K562 (cell line): ENCODE measurements at regions of chr1 and their contacts with region 1.

Region 1: GRCh38 chr1:54406339-54407153 is at the start of gene SSBP3:
- DNase-seq: peak; percentile 97 to 99 (median 97)
- ATAC-seq: peak; percentile 88
- H3K4me3 ChIP-seq: peak within 1 kb of the TSS; percentile 73
- H3K27ac ChIP-seq: peak within 1 kb of the TSS; percentile 97
- H3K4me1 ChIP-seq: peaks cover 64 to 70% of the 10 kb centered on the region in 2 experiments
- H3K27me3 ChIP-seq: no peaks in the 10 kb centered on the region
- CTCF ChIP-seq: peak in 1 of 3 experiments; percentile 12; a peak in 1 of 6 replicates
- EP300 ChIP-seq: no peak
- POLR2A ChIP-seq: peak; percentile 70
- RAD21 ChIP-seq: peak; percentile 21 to 29; a peak in 1 of 4 replicates
- polyA plus RNA-seq, gene SSBP3: 8.7 TPM

Region 2: GRCh38 chr1:53207726-53208125 is 1198.8 kb before region 1 on chr1:
- CTCF ChIA-PET with region 1: no interaction called
- POLR2A ChIA-PET with region 1: no interaction called
- in situ Hi-C with region 1: no loop called
- intact Hi-C with region 1: no loop called
- DNase-seq: no peak
- ATAC-seq: no peak
- H3K4me3 ChIP-seq: no peak overlapping the region
- H3K27ac ChIP-seq: no peak overlapping the region
- H3K4me1 ChIP-seq: no peaks in the 10 kb centered on the region
- H3K27me3 ChIP-seq: no peaks in the 10 kb centered on the region
- CTCF ChIP-seq: no peak
- EP300 ChIP-seq: no peak
- POLR2A ChIP-seq: no peak
- RAD21 ChIP-seq: no peak

Region 3: DNA sequence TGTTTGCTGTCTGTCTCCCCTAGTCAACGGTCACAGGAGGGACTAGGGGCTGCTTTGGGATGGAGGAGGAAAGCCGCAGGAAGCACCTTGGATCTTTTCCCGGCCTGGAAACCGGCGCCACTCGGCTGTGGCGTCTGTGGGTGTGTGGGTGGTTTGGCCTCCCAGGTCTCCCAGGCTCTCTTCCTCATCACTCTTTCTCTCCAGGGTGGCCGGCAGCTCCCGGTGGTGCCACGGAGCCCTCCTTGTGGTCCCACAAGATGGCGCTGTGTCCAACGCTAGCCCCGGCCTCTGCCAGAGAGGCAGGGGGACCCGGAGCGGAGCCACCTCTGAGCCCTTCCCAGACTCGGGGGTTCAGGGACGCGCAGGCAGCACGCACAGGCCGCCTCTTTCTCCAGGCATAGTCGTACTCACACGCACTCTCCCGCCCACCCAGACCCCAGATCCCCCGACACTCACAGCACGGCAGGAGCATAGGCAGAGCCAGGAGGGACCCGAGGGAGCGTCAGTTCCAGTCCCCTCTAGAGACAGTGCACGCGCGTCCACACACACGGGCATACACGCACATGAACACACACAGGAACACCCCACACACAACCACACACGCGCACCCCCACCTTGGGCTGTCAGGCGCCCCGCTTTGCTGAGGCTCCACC is 284.9 kb before region 1 on chr1:
- CTCF ChIA-PET with region 1: no interaction called
- POLR2A ChIA-PET with region 1: no interaction called
- in situ Hi-C with region 1: no loop called
- intact Hi-C with region 1: loop called (anchors 1 kb)
- DNase-seq: peak; percentile 90 to 94 (median 94)
- ATAC-seq: peak; percentile 96
- H3K4me3 ChIP-seq: peak overlapping the region; percentile 17
- H3K27ac ChIP-seq: no peak overlapping the region
- H3K4me1 ChIP-seq: peaks cover 7 to 21% of the 10 kb centered on the region in 2 experiments; a peak in 4 of 5 replicates
- H3K27me3 ChIP-seq: peaks cover 3 to 18% of the 10 kb centered on the region in 2 experiments; a peak in 3 of 5 replicates
- CTCF ChIP-seq: peak; percentile 91 to 93 (median 92)
- EP300 ChIP-seq: peak; percentile 27; the same call in 1 of the 2 replicates
- POLR2A ChIP-seq: no peak
- RAD21 ChIP-seq: peak; percentile 89 to 93

Region 4: DNA sequence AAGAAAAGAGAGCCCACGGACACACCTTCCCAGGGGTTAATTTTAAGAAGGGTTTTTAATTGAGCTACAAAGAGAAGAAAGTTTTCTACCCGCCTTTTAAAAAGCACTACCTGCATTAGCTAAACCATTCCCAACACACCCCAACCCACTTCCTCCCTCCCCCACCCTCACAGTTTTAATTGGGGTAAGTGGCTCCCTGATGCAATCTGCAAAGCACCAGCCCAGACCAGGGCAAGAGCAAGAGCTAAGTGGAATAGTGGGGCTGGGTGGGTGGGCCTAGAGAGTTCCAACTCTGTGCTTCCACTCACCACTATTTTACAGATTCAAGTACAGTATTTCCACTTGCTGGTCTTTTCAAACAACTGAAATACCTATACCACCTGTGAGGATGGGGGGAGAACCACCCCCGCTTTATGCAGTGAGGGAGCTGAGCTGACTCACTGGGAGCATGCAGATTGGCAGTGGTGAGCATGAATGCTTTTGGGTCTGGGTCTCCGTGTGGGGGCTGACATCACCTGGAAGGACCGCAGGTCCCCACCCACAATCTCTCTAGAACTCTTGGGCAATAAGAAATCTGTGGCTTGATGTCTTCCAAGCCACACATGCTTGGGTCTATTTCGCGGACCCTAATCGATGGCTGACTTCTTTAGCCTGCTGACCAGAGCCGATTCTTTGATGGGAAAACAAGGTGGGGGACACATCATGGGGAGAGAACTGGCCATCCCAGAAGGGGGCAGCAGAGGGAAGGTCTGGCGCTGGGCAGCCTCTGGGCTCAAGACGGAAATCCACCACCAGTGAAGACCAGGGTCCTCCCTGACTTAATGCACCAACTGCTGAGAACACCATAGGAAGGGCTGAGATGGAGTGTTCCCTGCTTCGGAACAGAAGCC is 95.9 kb before region 1 on chr1:
- CTCF ChIA-PET with region 1: no interaction called
- POLR2A ChIA-PET with region 1: interaction called, 4 read pairs
- in situ Hi-C with region 1: no loop called
- intact Hi-C with region 1: loop called (anchors 2 kb)
- DNase-seq: peak; percentile 66 to 79 (median 74)
- ATAC-seq: peak; percentile 89
- H3K4me3 ChIP-seq: no peak overlapping the region
- H3K27ac ChIP-seq: no peak overlapping the region
- H3K4me1 ChIP-seq: peaks cover 22 to 33% of the 10 kb centered on the region in 2 experiments
- H3K27me3 ChIP-seq: no peaks in the 10 kb centered on the region
- CTCF ChIP-seq: peak; percentile 77 to 81 (median 79)
- EP300 ChIP-seq: no peak
- POLR2A ChIP-seq: no peak
- RAD21 ChIP-seq: peak; percentile 73 to 90

Region 5: DNA sequence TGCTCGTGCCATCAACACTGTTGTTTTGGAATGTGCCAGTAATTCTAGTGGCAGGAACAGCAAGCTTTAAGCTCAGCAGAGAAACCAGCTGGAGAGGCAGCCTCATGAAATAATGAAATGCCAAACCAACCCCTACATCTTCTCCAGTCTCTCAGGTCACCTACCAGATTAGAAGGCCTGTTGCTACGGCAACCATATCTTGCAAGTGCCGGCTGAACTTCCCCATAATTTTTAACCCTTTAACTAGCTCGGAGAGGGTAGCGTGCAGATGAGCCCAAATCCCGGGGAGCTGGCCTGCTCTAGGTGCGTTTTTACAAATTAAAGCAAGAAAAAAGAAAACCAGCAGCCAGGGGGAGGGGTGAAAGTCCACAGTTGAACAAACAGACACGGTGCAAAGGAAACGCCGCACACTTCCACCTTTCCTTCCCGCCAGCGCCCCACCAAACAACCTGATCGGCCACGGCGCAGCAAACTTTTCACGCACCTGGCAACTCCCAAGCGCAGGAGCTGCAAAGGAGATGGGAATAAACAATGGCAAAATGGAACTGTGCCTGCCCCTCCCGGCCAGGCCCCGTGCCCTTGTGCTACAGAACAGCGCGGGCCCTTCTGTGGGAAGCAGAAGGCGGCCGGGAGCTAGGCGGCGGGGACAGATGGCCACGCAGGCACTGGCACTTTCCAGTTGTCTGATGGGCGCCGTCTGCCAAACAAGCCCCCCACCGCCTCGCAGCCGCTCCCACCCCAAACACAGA is 50.4 kb before region 1 on chr1:
- CTCF ChIA-PET with region 1: no interaction called
- POLR2A ChIA-PET with region 1: interaction called, 5 read pairs
- in situ Hi-C with region 1: no loop called
- intact Hi-C with region 1: loop called (anchors 2 kb)
- DNase-seq: peak in 3 of 4 experiments; percentile 54 to 90 (median 79)
- ATAC-seq: peak; percentile 84
- H3K4me3 ChIP-seq: peak overlapping the region; percentile 6; the same call in 1 of the 2 replicates
- H3K27ac ChIP-seq: peak overlapping the region; percentile 6; the same call in 1 of the 3 replicates
- H3K4me1 ChIP-seq: peaks cover 40 to 54% of the 10 kb centered on the region in 2 experiments
- H3K27me3 ChIP-seq: no peaks in the 10 kb centered on the region
- CTCF ChIP-seq: no peak
- EP300 ChIP-seq: 0 out of 2 replicates have a peak, but pooled peaks have one; percentile 12
- POLR2A ChIP-seq: no peak
- RAD21 ChIP-seq: no peak

Region 6: DNA sequence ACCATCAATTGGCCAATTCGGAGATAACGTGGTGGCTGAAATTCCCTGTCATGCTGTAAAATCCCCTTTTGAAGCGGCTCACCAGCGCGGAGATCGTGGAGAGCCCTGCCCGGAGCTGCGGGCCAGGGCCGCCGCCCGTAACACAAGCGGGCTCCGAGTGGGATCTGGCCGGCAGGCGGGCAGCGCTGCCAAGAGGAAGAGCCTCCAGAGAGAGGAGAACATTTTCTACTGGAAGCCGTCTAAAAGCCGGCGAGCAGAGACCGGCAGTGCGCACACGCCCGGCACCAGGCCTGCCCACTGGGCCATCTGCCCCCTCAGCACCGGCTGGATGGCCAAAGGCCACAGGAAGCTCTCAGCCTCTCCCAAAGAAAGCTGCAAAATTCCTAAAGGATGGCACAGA is 15.9 kb before region 1 on chr1:
- CTCF ChIA-PET with region 1: no interaction called
- POLR2A ChIA-PET with region 1: interaction called, 21 read pairs
- in situ Hi-C with region 1: no loop called
- intact Hi-C with region 1: no loop called
- DNase-seq: no peak
- ATAC-seq: no peak
- H3K4me3 ChIP-seq: no peak overlapping the region
- H3K27ac ChIP-seq: no peak overlapping the region
- H3K4me1 ChIP-seq: peaks cover 4 to 6% of the 10 kb centered on the region in 2 experiments; a peak in 4 of 5 replicates
- H3K27me3 ChIP-seq: no peaks in the 10 kb centered on the region
- CTCF ChIP-seq: no peak
- EP300 ChIP-seq: no peak
- POLR2A ChIP-seq: no peak
- RAD21 ChIP-seq: no peak

Region 7: DNA sequence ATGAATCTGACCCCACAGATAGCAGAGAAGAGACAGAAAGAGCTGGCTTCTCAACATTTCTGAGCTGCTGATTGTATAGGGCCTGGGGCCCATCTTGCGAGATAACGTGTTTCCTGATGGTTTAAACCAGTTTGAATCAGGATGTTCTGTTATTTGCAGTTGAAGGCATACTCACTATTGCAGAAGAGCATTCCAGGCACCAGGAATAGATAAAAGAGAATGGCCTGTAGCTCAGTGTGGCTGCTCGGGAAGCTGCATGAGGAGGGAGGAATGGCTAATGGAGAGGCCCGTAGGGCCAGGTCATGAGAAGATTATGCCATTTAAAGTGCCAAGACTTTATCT is 22.6 kb after region 1 on chr1:
- CTCF ChIA-PET with region 1: no interaction called
- POLR2A ChIA-PET with region 1: no interaction called
- in situ Hi-C with region 1: no loop called
- intact Hi-C with region 1: no loop called
- DNase-seq: peak in 1 of 4 experiments; percentile 20
- ATAC-seq: peak; percentile 34
- H3K4me3 ChIP-seq: no peak overlapping the region
- H3K27ac ChIP-seq: no peak overlapping the region
- H3K4me1 ChIP-seq: peaks cover 0 to 6% of the 10 kb centered on the region in 2 experiments; a peak in 3 of 5 replicates
- H3K27me3 ChIP-seq: no peaks in the 10 kb centered on the region
- CTCF ChIP-seq: no peak
- EP300 ChIP-seq: no peak
- POLR2A ChIP-seq: no peak
- RAD21 ChIP-seq: no peak

Region 8: DNA sequence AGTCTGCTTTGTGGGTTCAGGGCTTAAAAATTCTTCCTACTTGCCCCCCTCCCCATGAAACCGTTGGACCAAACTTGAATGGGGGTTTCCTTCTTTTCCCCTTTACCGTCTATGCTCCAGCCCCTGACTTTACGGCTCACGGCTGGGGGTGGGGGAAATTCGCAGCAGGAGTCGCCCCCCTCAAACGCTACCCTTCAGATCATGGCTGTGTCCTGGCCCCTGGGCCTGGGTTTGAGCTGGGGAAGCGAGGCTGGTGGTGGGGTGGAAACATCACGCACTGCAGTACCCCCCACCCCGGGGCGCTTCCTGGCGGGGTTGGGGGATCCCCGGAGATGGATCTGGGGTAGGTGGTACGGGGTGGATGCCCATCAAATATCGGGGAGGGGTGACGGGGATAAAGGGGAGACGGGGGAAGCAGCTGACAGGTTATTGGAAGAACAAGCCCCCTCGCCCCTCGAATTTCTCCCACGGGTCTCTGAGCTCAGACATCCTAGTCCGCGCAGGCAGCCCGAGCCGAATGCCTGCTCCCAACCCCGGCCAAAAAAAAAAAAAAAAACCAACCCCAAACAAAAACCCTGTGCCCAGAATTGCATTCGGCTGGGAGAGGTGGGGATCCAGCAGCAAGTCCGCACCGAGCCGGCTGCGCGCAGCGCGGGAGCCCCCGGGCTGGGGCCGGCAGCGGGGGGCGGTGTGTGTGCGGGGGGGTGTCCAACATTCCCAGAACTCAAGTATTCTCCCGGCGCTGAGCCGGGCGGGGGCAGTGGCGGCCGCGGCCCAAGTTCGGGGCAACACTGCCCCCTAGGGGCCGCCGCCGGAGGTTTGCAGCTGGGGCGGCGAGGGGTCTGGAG is 82.5 kb after region 1 on chr1:
- CTCF ChIA-PET with region 1: interaction called, 34 read pairs
- POLR2A ChIA-PET with region 1: interaction called, 24 read pairs
- in situ Hi-C with region 1: loop called (anchors 5 kb)
- intact Hi-C with region 1: loop called (anchors 1 kb)
- DNase-seq: peak; percentile 90 to 96 (median 94)
- ATAC-seq: peak; percentile 88
- H3K4me3 ChIP-seq: peak overlapping the region; percentile 59
- H3K27ac ChIP-seq: peak overlapping the region; percentile 94
- H3K4me1 ChIP-seq: peaks cover 11 to 39% of the 10 kb centered on the region in 2 experiments
- H3K27me3 ChIP-seq: peaks cover 0 to 2% of the 10 kb centered on the region in 2 experiments; a peak in 1 of 5 replicates
- CTCF ChIP-seq: peak; percentile 90 to 99 (median 95)
- EP300 ChIP-seq: peak; percentile 44
- POLR2A ChIP-seq: 0 out of 2 replicates have a peak, but pooled peaks have one; percentile 9
- RAD21 ChIP-seq: peak; percentile 99

Region 9: DNA sequence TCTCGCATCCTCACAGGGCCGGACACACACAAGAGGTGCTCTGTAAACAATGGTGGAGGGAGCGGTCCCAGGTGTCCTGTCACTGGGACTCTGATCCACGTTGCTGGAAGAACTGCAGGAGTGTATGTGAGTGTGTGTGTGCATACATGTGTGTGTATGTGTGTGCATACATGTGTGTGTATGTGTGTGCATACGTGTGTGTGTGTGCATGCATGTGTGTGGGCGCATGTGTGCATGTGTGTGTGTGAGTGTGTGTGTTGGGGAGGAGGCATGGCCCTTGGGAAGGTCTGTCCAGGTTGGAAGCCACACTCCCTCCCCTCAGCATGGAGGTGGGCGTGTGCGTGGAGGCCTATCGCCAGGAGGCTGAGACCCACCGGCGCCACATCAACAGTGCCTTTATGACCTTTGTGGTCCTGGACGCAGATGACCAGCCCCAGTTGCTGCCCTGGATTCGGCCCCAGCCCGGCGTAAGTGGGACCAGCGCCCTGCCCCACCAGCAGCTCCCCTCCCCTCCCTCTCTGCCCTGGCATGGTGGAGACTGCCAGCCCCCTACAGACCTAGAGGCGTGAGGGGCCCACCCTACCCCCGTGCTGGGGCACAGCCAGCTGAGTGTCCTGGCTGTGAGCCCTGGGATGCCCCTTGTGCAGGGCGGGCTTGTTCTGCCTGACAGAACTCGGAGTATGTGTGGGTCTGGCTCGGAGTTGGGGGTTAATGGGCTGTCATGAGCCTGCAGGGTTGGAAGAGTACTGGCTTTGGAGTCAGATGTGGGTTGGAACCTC is 194.6 kb after region 1 on chr1:
- CTCF ChIA-PET with region 1: no interaction called
- POLR2A ChIA-PET with region 1: no interaction called
- in situ Hi-C with region 1: no loop called
- intact Hi-C with region 1: no loop called
- DNase-seq: no peak
- ATAC-seq: no peak
- H3K4me3 ChIP-seq: no peak overlapping the region
- H3K27ac ChIP-seq: no peak overlapping the region
- H3K4me1 ChIP-seq: peaks cover 0 to 5% of the 10 kb centered on the region in 2 experiments; a peak in 1 of 5 replicates
- H3K27me3 ChIP-seq: peaks cover 39 to 70% of the 10 kb centered on the region in 2 experiments
- CTCF ChIP-seq: no peak
- EP300 ChIP-seq: no peak
- POLR2A ChIP-seq: no peak
- RAD21 ChIP-seq: no peak